Gastrocnemius medialis (tissue), 4 donors: ENCODE measurements at regions of chr19 and their contacts with region 1.

Region 1: GRCh38 chr19:14081325-14082093 is 4.1 kb downstream of the C19orf67 start:
- DNase-seq: peak; percentile 98 to 99
- ATAC-seq: peak; percentile 98 to 100
- H3K4me3 ChIP-seq: peak overlapping the region; percentile 62 to 97 (median 93)
- H3K27ac ChIP-seq: peak overlapping the region; percentile 80 to 98 (median 94)
- H3K4me1 ChIP-seq: peaks cover 17 to 18% of the 10 kb centered on the region in 2 donors
- H3K27me3 ChIP-seq: no peaks in the 10 kb centered on the region
- CTCF ChIP-seq: no peak
- POLR2A ChIP-seq: peak; percentile 72 to 76

Region 2: DNA sequence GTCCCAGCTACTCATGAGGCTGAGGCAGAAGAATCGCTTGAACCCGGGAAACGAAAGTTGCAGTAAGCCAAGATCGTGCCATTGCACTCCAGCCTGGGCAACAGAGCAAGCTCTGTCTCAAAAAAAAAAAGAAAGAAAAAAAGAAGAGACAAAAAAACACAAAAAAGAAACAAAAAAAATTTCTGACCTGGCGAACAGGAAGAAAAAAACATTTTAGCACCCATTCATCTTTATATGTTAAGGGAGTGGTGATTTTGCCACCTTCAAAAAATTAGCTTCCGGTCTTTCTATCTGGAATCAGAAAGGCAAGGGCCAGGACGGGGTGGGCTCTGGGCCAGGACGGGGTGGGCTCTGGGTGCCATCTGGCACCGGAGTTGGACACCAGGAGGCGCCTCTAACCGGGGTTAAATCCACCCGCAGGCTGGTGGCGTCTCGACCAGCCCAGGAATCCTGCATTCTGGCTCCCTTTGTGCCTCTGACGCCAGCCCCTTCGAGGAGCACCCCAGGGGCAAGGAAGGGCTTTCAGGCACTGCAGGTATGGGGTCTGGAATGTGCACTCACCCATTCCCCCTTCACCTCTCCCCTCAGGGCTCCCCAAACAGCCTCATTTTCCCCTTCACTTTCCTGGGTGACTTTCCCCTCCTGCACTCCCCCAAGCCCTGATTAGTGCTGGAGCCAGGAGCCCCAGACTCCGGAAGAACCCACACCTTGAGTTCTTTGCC is 296.6 kb before region 1 on chr19:
- in situ Hi-C with region 1: loop called in 1 of 4 experiments (anchors 10 kb)
- intact Hi-C with region 1: no loop called
- DNase-seq: peak; percentile 36 to 62
- ATAC-seq: peak; percentile 72 to 74
- H3K4me3 ChIP-seq: peak overlapping the region; percentile 10 to 39 (median 33)
- H3K27ac ChIP-seq: no peak overlapping the region
- H3K4me1 ChIP-seq: peaks cover 12 to 14% of the 10 kb centered on the region in 2 donors
- H3K27me3 ChIP-seq: peaks cover 0 to 19% (median 8%) of the 10 kb centered on the region in 3 donors
- CTCF ChIP-seq: peak; percentile 56 to 80 (median 74)
- POLR2A ChIP-seq: no peak